BJ (cell line): ENCODE measurements at regions of chr12 and their contacts with region 1.

Region 1: GRCh38 chr12:46303039-46303666 is 34.3 kb upstream of the SLC38A1 start:
- DNase-seq: no peak
- H3K4me3 ChIP-seq: no peak overlapping the region
- H3K27me3 ChIP-seq: peaks cover 2% of the 10 kb centered on the region
- CTCF ChIP-seq: peak; percentile 54

Region 2: GRCh38 chr12:46209914-46210872 is 93.0 kb before region 1 on chr12:
- CTCF ChIA-PET with region 1: no interaction called
- POLR2A ChIA-PET with region 1: no interaction called
- DNase-seq: no peak
- H3K4me3 ChIP-seq: no peak overlapping the region
- H3K27me3 ChIP-seq: no peaks in the 10 kb centered on the region
- CTCF ChIP-seq: no peak

Region 3: DNA sequence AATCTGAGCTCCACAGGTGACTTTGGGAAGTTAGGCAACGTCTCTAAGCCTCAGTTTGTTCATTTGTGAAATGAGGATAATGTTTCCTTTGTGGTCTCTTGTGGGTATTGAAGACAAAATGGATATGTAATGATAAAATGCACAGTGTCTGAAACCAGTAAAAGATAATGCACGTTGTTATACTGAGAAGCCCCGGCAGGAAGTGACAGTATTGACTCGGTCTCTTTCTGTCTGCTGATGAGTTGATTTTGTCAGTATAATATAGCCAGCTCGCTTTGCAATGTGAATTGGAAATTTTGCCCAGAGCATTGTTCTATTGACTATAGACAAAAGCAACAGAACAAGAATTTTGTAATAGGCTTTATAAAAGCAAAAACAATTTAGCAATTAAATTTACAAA is 14.9 kb after region 1 on chr12:
- CTCF ChIA-PET with region 1: interaction called, 10 read pairs
- POLR2A ChIA-PET with region 1: no interaction called
- DNase-seq: no peak
- H3K4me3 ChIP-seq: no peak overlapping the region
- H3K27me3 ChIP-seq: no peaks in the 10 kb centered on the region
- CTCF ChIP-seq: no peak

Region 4: DNA sequence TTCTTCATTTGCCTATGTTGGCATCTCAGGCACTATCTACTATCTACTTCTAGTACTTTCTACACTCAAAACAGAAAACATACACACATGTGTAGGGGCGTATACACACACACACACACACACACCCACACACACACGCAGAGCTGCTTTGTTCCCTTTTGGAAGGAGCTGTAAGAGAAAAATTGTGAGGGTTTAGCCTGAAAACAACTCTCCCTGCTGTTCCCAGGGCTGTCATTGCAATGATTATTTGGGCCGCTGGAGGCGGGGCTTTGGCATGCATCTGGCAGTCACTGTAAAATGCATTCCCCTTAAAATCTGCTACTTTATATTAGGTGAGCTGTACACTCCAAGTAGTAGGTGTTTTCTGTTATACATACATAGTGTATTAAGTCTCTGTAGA is 98.5 kb after region 1 on chr12:
- CTCF ChIA-PET with region 1: no interaction called
- POLR2A ChIA-PET with region 1: no interaction called
- DNase-seq: no peak
- H3K4me3 ChIP-seq: no peak overlapping the region
- H3K27me3 ChIP-seq: no peaks in the 10 kb centered on the region
- CTCF ChIP-seq: peak; percentile 44; the same call in 1 of the 2 replicates